Activated naive CD4-positive, alpha-beta T cell treated with anti-CD3 and anti-CD28 coated beads, Interleukin-2, amount 10 ng/mL, durations not matched to agents 7 days and 5 days (primary cell): ENCODE measurements at regions of chr14 and their contacts with region 1.

Region 1: DNA sequence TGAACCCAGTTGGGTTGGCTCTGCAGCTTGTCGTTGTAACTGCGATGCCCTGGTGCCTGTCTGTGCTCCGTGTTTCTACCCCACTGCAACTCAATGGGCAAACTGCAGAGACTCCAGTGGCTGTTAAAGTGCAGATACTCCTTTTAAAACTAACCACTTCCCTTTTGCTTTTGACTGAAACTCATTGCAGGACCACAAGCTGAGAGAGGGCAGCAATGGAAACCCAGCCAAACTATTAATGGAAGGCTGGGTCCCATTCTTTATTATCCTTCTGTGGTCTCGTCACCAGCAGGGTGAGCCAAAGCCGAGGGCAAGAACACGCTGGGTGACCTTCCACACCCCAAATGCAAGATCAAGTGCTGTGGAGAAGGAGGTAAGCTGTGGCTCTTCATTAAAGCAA is 910.4 kb downstream of the VRK1 start:
- DNase-seq: peak; percentile 55
- H3K4me3 Mint-ChIP-seq: no peak overlapping the region
- H3K27ac Mint-ChIP-seq: peak overlapping the region; percentile 93
- H3K4me1 Mint-ChIP-seq: peaks cover 93% of the 10 kb centered on the region
- H3K27me3 Mint-ChIP-seq: no peaks in the 10 kb centered on the region

Region 2: GRCh38 chr14:97692037-97692436 is 15.6 kb before region 1 on chr14:
- CTCF ChIA-PET with region 1: no interaction called
- DNase-seq: no peak
- H3K4me3 Mint-ChIP-seq: no peak overlapping the region
- H3K27ac Mint-ChIP-seq: no peak overlapping the region
- H3K4me1 Mint-ChIP-seq: peaks cover 11% of the 10 kb centered on the region
- H3K27me3 Mint-ChIP-seq: no peaks in the 10 kb centered on the region

Region 3: GRCh38 chr14:97724265-97724731 is 16.7 kb after region 1 on chr14:
- CTCF ChIA-PET with region 1: interaction called, 13 read pairs
- DNase-seq: peak; percentile 57
- H3K4me3 Mint-ChIP-seq: peak overlapping the region; percentile 59
- H3K27ac Mint-ChIP-seq: peak overlapping the region; percentile 94
- H3K4me1 Mint-ChIP-seq: peaks cover 77% of the 10 kb centered on the region
- H3K27me3 Mint-ChIP-seq: no peaks in the 10 kb centered on the region